ENCODE measurements at regions of chr1 and their contacts with region 1.

Region 1: GRCh38 chr1:90721210-90722194 is 4.4 kb upstream of the BARHL2 start:
- DNase-seq: peak; percentile 78
- ATAC-seq: peak; percentile 47
- H3K4me3 Mint-ChIP-seq: no peak overlapping the region
- H3K27ac Mint-ChIP-seq: no peak overlapping the region
- H3K4me1 Mint-ChIP-seq: peaks cover 56% of the 10 kb centered on the region
- H3K27me3 Mint-ChIP-seq: peaks cover 81% of the 10 kb centered on the region

Region 2: GRCh38 chr1:89762779-89763648 is 958.5 kb before region 1 on chr1:
- CTCF ChIA-PET with region 1: no interaction called
- POLR2A ChIA-PET with region 1: no interaction called
- intact Hi-C with region 1: no loop called
- DNase-seq: peak; percentile 94
- ATAC-seq: peak; percentile 99
- H3K4me3 Mint-ChIP-seq: peak overlapping the region; percentile 68
- H3K27ac Mint-ChIP-seq: peak overlapping the region; percentile 89
- H3K4me1 Mint-ChIP-seq: peaks cover 54% of the 10 kb centered on the region
- H3K27me3 Mint-ChIP-seq: no peaks in the 10 kb centered on the region

Region 3: DNA sequence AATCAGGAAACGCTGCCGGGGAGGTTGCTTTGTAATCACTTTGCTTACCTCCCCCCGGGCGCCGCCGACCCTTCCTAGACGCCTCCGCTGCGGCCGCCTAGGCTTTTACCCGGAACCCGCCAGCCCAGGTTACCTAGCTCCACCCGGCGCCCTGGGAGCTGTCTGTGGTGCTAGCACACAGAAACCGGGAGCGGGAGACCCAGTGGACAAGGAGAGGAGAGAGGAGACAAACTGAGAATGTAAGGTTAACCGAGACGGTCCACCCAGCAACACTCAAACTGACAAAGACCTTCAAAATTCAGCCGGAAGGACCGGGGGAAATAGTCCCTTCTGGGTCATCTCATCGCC is 14.2 kb before region 1 on chr1:
- CTCF ChIA-PET with region 1: interaction called, 10 read pairs
- POLR2A ChIA-PET with region 1: interaction called, 4 read pairs
- intact Hi-C with region 1: loop called (anchors 1 to 2 kb)
- DNase-seq: peak; percentile 46
- ATAC-seq: peak; percentile 26
- H3K4me3 Mint-ChIP-seq: peak overlapping the region; percentile 20
- H3K27ac Mint-ChIP-seq: no peak overlapping the region
- H3K4me1 Mint-ChIP-seq: peaks cover 10% of the 10 kb centered on the region
- H3K27me3 Mint-ChIP-seq: peaks cover 72% of the 10 kb centered on the region

Region 4: DNA sequence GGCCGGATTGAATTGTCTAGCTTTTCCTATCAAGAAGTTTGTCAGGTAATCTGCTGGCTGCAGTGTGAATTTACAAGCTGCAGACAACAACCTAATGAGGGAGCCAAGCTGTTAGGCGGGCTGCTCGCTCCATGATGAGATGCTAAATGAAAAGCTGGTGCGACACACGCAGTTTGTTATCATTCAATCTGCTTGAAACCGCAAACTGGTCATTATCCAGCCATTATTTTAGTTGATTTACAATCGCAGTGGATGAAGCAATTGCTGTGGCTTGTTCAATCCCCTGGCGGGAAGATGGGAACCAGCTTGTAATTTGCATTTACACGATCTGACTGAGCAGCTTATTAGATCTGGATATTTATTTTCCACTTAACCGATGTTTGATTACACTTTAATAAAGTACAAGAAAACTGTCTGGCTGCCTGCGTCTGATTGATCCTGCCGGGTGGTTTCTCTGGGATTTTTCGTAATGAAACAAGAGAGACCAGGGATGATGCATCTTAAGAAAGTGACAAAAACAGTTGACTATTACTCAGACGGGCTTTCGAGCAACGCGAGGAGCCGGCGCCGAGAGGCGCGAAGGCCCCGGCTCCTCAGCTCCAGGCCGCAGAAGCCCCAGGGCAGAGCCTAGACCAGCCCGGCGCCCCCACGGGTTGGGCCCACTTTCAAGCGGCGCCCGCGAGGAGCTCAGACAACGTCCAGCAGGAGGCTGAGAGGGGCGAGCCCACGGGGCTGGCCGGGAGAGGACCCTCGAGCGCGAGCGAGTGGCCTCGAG is 113.6 kb after region 1 on chr1:
- CTCF ChIA-PET with region 1: interaction called, 8 read pairs
- POLR2A ChIA-PET with region 1: interaction called, 5 read pairs
- intact Hi-C with region 1: loop called (anchors 2 to 5 kb)
- DNase-seq: peak; percentile 60
- ATAC-seq: peak; percentile 87
- H3K4me3 Mint-ChIP-seq: no peak overlapping the region
- H3K27ac Mint-ChIP-seq: no peak overlapping the region
- H3K4me1 Mint-ChIP-seq: peaks cover 23% of the 10 kb centered on the region
- H3K27me3 Mint-ChIP-seq: peaks cover 75% of the 10 kb centered on the region

Region 5: DNA sequence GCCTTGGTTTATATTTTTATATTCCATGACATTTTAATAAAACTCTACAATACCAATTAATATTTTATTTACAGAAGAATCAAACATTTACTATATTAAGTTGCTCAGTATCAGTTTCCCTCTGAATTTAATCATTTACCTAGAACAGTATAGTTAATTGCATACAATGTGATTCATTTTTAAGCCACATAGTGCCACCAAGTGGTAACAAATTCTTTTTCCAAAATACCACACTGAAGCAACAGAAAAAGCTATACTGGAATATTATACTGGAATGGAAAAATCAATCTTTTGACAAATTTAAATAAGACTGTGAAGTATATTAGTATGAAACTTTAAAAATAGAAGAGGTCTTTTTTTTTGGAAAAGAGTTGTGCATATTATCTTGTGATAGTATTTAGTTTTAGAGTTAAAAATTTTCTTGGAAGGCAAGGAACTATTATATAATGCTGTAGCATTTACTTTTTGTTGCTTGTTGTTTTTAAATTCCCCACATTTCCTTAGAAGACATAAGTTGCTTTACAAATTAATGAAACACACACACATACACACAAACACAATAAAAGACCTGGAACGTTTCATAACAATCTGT is 243.0 kb after region 1 on chr1:
- CTCF ChIA-PET with region 1: interaction called, 3 read pairs
- POLR2A ChIA-PET with region 1: no interaction called
- intact Hi-C with region 1: loop called (anchors 2 to 5 kb)
- DNase-seq: no peak
- ATAC-seq: no peak
- H3K4me3 Mint-ChIP-seq: no peak overlapping the region
- H3K27ac Mint-ChIP-seq: no peak overlapping the region
- H3K4me1 Mint-ChIP-seq: peaks cover 38% of the 10 kb centered on the region
- H3K27me3 Mint-ChIP-seq: no peaks in the 10 kb centered on the region

Region 6: DNA sequence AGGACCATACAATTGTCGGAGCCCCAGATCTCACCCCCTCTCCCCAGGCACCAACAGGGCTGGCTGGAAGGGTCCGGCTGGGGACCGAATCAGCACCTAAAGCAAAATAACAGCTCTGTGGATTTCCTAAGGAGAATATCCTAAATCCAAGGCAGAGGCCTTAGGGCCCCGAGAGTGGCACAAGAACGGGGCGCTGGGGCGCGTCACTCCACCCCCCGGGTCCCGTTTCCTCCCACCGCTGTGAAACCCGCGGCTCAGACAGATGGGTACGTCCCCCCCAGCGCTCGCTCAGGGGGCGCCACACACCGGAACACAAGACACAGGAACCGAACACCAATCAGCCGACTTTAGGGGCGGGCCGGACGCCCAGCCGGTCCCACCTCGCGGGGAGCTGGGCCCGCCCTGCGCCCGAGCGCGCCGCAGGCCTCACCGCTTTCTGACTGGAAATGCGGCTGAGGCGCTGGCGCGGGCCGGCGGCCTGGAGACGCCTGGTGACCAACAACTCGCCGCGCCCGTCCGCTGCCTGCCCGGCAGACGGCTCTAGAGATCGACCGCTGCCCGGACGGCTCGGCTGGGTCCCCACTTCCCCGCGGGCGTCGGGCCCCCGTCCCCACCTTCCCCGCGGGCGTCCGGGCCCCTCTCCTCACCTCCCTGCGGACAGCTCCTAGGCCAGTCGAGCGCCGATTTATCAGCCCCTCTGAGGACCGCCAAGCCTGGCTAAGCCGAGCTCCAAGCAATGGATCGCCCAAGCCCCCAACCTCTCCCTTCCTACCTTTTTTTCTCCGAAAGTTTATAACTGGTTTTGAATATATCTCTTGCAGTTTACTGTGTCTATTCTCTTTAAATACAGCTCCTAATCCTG is 682.9 kb after region 1 on chr1 and contains the start of gene HFM1:
- CTCF ChIA-PET with region 1: no interaction called
- POLR2A ChIA-PET with region 1: no interaction called
- intact Hi-C with region 1: loop called in 1 of 2 experiments (anchors 10 kb)
- DNase-seq: peak; percentile 67
- ATAC-seq: peak; percentile 96
- H3K4me3 Mint-ChIP-seq: peak within 1 kb of the TSS; percentile 67
- H3K27ac Mint-ChIP-seq: peak within 1 kb of the TSS; percentile 60
- H3K4me1 Mint-ChIP-seq: peaks cover 7% of the 10 kb centered on the region
- H3K27me3 Mint-ChIP-seq: peaks cover 44% of the 10 kb centered on the region
- total RNA-seq, gene HFM1: not detected

Measured in activated CD4-positive, alpha-beta T cell treated with anti-CD3 and anti-CD28 coated beads for 36 hours (primary cell).